MCF 10A (cell line): ENCODE measurements at regions of chr19 and their contacts with region 1.

Region 1: DNA sequence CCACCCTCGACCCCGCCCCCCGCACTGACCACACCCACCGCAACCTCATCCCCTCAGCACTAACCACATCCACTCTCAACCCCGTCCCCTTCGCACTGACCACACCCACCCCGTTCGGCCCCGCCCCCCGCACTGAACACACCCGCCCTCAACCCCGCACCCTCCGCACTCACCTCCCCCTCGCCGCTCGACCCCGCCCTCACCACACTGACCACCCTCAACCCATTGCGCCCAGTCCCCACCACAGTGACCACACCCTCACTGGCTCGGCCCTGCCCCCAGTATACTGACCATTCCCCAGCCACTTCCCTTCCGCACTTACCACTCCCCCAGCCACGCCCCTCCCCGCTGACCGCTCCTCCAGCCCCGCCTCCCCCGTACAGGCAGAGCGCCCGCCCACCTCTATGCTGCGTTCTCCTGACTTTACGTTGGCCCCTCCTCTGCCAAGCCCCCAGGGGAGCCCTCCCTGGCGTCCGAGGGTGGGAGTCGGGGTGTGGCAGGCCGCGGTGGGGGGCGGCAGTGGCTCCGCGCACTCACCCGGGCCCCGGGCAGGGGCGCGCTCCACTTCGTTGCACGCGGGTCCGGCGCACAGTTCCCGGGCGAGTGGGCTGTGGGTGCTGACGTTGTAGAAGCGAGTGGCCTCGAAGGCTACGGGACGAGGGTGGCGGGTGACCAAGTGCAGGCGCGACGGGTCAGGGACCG is 8.5 kb downstream of the F2RL3 start:
- DNase-seq: peak; percentile 86
- H3K4me3 Mint-ChIP-seq: peak overlapping the region; percentile 72
- H3K27ac Mint-ChIP-seq: peak overlapping the region; percentile 31
- H3K4me1 Mint-ChIP-seq: no peaks in the 10 kb centered on the region
- H3K27me3 Mint-ChIP-seq: no peaks in the 10 kb centered on the region
- CTCF ChIP-seq: no peak

Region 2: DNA sequence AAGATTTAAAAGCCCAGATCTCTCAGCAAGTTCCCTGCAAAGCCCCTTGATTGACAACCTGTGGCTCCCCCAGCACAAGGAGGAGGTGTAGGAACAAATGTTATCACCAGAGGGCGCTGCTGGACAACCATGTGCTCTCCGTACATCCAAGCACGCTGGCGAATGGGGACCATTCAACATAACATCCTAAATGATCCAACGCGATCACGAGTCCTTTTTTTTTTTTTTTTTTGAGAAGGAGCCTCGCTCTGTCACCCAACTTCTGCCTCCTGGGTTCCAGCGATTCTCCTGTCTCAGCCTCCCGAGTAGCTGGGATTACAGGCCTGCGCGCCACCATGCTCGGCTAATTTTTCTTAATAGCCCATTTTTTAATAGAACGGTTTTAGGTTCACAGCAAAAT is 125.7 kb before region 1 on chr19:
- CTCF ChIA-PET with region 1: interaction called, 3 read pairs
- POLR2A ChIA-PET with region 1: no interaction called
- intact Hi-C with region 1: loop called (anchors 2 kb)
- DNase-seq: peak; percentile 88
- H3K4me3 Mint-ChIP-seq: no peak overlapping the region
- H3K27ac Mint-ChIP-seq: no peak overlapping the region
- H3K4me1 Mint-ChIP-seq: no peaks in the 10 kb centered on the region
- H3K27me3 Mint-ChIP-seq: no peaks in the 10 kb centered on the region
- CTCF ChIP-seq: peak; percentile 89

Region 3: GRCh38 chr19:16814526-16815100 is 82.7 kb before region 1 on chr19:
- CTCF ChIA-PET with region 1: no interaction called
- POLR2A ChIA-PET with region 1: no interaction called
- intact Hi-C with region 1: no loop called
- DNase-seq: no peak
- H3K4me3 Mint-ChIP-seq: no peak overlapping the region
- H3K27ac Mint-ChIP-seq: no peak overlapping the region
- H3K4me1 Mint-ChIP-seq: no peaks in the 10 kb centered on the region
- H3K27me3 Mint-ChIP-seq: no peaks in the 10 kb centered on the region
- CTCF ChIP-seq: no peak

Region 4: DNA sequence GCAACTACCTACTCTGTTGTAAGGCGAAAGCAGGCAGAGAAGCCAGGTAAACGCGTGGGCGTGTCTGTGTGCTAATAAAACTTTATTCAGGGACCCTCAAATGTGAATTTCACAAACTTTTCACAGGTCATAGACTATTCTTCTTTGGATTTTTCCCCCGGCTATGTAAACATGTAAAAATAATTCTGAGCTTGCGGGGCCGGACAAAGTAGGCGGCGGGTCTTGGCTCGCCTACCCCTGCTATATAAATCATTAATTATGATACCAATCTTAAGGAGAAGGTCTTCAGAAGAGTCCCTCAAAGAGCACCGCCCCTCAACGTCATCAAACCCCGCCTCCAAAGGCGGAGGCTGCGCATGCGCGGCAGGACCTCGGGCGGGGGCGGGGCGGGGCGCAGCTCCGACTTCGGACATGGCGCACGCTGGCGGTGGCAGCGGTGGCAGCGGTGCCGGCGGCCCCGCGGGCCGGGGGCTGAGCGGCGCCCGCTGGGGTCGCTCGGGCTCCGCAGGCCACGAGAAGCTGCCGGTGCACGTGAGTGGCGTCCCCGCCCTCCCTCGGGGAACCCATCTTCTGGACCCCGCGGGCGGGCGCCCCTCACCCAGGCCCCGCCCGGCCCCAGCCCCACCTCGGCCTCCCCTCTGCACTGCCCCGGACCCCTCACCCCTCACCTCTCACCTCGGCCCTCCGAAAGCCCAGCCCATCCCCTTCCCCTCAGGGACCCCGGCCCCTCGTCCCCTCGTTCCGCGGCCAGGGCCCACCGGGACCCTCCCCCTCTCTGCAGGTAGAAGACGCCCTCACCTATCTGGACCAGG is 68.1 kb before region 1 on chr19 and contains the start of gene SIN3B:
- CTCF ChIA-PET with region 1: interaction called, 3 read pairs
- POLR2A ChIA-PET with region 1: no interaction called
- intact Hi-C with region 1: loop called (anchors 5 kb)
- DNase-seq: peak; percentile 94
- H3K4me3 Mint-ChIP-seq: peak within 1 kb of the TSS; percentile 75
- H3K27ac Mint-ChIP-seq: peak within 1 kb of the TSS; percentile 59
- H3K4me1 Mint-ChIP-seq: peaks cover 17% of the 10 kb centered on the region
- H3K27me3 Mint-ChIP-seq: no peaks in the 10 kb centered on the region
- CTCF ChIP-seq: no peak
- total RNA-seq, gene SIN3B: 56.0 and 66.6 TPM in 2 replicates

Region 5: DNA sequence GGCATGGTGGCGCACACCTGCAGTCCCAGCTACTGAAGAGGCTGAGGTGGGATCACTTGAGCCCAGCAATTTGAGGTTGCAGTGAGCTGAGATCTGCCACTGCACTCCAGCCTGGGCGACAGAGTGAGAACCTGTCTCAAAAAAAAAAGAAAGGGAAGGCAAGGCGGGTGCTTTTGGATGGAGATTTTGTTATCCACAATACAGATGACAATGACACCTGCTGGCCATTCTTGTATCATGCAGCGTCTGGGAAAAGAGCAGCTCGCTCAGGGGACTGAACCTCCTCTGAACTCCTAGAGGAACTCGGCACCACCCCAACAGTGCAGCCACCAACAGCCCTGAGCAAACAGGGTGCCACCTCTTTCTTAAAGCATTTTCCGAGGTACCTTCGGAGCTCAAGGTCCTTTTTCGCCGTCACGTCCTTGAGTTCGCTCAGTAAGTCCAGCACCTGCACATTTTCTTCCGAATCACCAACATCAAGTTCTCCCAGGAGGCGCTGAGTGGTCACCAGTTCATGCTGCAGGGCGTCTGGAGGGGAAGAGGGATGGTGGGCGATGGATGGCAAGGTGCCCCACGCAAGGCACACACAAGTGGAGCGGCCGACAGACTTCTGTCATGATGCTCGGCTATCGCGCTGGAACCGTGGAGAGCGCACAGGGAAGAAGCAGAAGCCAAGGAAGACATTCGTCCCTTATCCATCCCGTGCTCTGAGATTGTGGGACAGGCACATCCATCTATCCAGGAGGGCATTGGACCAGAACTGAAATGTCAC is 155.3 kb after region 1 on chr19:
- CTCF ChIA-PET with region 1: interaction called, 3 read pairs
- POLR2A ChIA-PET with region 1: no interaction called
- intact Hi-C with region 1: loop called (anchors 1 kb)
- DNase-seq: peak; percentile 63
- H3K4me3 Mint-ChIP-seq: no peak overlapping the region
- H3K27ac Mint-ChIP-seq: no peak overlapping the region
- H3K4me1 Mint-ChIP-seq: no peaks in the 10 kb centered on the region
- H3K27me3 Mint-ChIP-seq: no peaks in the 10 kb centered on the region
- CTCF ChIP-seq: peak; percentile 65